Left lung (tissue), 14 donors: ENCODE measurements at regions of chr1 and their contacts with region 1.

Region 1: GRCh38 chr1:149962123-149962548 is 25.5 kb upstream of the MTMR11 start:
- DNase-seq: peak in 3 of 4 donors; percentile 40 to 85 (median 67)
- ATAC-seq: peak; percentile 97
- H3K4me3 ChIP-seq: no peak overlapping the region
- H3K27ac ChIP-seq: peak overlapping the region; percentile 2 to 16
- H3K4me1 ChIP-seq: peaks cover 7 to 26% of the 10 kb centered on the region in 2 donors
- H3K27me3 ChIP-seq: no peaks in the 10 kb centered on the region
- CTCF ChIP-seq: peak; percentile 72 to 82

Region 2: GRCh38 chr1:150049926-150050325 is 87.8 kb after region 1 on chr1:
- intact Hi-C with region 1: loop called in 1 of 2 experiments (anchors 5 kb)
- DNase-seq: no peak
- ATAC-seq: no peak
- H3K4me3 ChIP-seq: no peak overlapping the region
- H3K27ac ChIP-seq: no peak overlapping the region
- H3K4me1 ChIP-seq: peaks cover 0 to 28% of the 10 kb centered on the region in 2 donors
- H3K27me3 ChIP-seq: peaks cover 0 to 7% of the 10 kb centered on the region in 2 donors
- CTCF ChIP-seq: no peak

Region 3: DNA sequence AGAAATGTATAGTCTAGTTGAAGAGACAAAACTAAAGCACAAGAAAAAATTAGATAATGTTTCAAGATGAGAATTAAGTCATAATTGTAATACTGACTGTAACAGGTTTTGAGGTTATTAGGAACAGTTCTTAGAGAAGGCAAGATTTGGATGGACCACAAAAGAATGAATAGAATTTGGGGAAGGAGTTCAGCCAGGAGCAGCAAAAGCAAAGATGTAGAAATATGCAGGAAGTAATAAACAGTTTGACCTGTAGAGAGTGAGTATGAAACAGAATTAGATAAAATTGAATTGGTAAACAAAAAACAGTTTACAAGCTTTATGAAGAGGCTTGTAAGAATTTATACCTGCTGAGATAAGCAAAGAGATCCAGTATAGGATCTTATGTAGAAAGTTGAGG is 121.8 kb after region 1 on chr1:
- intact Hi-C with region 1: no loop called
- DNase-seq: no peak
- ATAC-seq: no peak
- H3K4me3 ChIP-seq: no peak overlapping the region
- H3K27ac ChIP-seq: no peak overlapping the region
- H3K4me1 ChIP-seq: no peaks in the 10 kb centered on the region
- H3K27me3 ChIP-seq: no peaks in the 10 kb centered on the region
- CTCF ChIP-seq: no peak

Region 4: DNA sequence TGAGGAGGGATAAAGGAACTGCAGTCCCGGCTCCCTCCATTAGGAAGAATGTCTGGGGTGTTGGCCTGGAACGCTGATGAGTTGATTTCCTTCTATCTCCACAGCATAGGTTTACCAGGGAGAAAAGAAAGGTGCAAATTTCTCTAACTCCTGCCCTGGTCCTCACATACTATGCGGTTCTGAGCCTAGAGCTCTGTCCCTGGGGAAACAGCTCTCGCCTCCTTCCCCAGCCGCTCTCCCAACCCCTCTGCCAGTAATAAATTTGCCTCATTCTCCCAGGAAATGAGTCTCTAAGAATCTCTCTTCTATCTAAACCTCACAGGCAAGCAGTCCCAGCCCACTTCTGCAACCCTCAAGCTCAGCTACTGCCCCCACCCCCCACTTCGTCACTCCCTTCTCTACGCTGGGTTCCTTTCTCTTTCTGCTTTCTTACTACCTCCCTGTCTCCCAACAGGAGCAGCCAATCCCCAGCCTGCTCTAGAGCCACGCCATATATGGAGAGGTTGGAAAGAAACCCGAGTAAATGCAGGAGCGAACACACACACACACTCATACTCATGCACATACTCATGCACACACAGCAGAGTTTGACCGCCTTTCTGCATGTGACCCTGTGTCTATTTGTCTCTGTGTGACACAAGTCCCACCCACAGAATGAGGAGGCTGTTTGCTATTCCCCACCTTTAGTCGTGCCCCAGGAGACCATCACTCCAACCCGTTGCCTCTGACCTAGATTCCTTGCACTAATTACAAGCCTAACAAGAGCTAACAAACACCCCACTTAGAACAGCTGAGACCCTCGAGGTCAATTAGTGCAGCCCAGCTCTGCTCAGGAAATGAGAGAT is 200.9 kb after region 1 on chr1:
- intact Hi-C with region 1: loop called in 1 of 2 experiments (anchors 10 kb)
- DNase-seq: peak; percentile 85 to 97 (median 92)
- ATAC-seq: peak; percentile 94
- H3K4me3 ChIP-seq: peak overlapping the region in 1 of 2 donors; percentile 18
- H3K27ac ChIP-seq: peak overlapping the region; percentile 89 to 95
- H3K4me1 ChIP-seq: peaks cover 12 to 81% of the 10 kb centered on the region in 2 donors
- H3K27me3 ChIP-seq: no peaks in the 10 kb centered on the region
- CTCF ChIP-seq: no peak

Region 5: DNA sequence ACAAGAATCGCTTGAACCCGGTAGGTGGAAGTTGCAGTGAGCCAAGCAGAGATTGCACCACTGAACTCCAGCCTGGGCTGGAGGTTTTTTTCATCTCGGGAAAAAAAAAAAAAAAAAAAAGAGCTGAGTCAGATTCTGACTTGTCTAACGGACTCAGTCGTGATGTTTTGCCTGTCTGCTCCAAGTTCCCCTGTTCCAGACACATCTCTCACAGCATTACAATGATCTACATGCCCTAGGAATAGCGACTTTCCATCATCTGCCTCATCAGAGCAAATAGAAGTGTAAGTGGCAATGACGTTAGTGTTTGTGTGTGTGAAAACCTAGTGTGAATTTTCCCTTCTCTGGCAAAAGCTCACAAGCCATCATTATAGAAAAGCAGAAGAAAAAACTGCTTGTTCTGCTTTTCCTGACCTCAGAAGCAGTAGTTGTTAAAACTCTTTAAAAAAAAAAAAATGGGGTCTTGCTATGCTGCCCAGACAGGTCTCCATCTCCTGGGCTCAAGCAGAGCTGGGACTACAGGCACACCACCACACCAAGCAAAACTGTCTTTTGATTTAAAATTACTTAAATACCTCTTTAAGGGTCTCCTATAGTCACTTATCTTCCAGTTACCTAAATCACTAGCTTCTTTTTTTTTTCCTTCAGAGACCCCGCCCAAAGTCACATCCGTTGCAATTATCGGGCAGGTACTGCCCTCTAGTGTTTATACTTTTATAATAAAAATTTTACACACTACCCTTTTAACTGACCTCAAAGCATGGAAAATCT is 224.8 kb after region 1 on chr1:
- intact Hi-C with region 1: loop called in 1 of 2 experiments (anchors 5 kb)
- DNase-seq: peak in 3 of 4 donors; percentile 26 to 44 (median 38)
- ATAC-seq: peak; percentile 83
- H3K4me3 ChIP-seq: peak overlapping the region in 1 of 2 donors; percentile 3
- H3K27ac ChIP-seq: peak overlapping the region; percentile 20 to 92
- H3K4me1 ChIP-seq: peaks cover 0 to 35% of the 10 kb centered on the region in 2 donors
- H3K27me3 ChIP-seq: no peaks in the 10 kb centered on the region
- CTCF ChIP-seq: peak; percentile 26 to 31